ENCODE measurements at regions of chr9 and their contacts with region 1.

Region 1: GRCh38 chr9:112012026-112012902 is 115.7 kb downstream of the UGCG start:
- DNase-seq: peak; percentile 96
- ATAC-seq: peak; percentile 92
- H3K4me3 ChIP-seq: no peak overlapping the region
- H3K27ac ChIP-seq: peak overlapping the region; percentile 92
- H3K4me1 ChIP-seq: peaks cover 52% of the 10 kb centered on the region
- H3K27me3 ChIP-seq: no peaks in the 10 kb centered on the region
- CTCF ChIP-seq: no peak
- EP300 ChIP-seq: peak; percentile 96 to 97
- POLR2A ChIP-seq: peak; percentile 43; the same call in 1 of the 2 replicates
- RAD21 ChIP-seq: peak; percentile 35

Region 2: DNA sequence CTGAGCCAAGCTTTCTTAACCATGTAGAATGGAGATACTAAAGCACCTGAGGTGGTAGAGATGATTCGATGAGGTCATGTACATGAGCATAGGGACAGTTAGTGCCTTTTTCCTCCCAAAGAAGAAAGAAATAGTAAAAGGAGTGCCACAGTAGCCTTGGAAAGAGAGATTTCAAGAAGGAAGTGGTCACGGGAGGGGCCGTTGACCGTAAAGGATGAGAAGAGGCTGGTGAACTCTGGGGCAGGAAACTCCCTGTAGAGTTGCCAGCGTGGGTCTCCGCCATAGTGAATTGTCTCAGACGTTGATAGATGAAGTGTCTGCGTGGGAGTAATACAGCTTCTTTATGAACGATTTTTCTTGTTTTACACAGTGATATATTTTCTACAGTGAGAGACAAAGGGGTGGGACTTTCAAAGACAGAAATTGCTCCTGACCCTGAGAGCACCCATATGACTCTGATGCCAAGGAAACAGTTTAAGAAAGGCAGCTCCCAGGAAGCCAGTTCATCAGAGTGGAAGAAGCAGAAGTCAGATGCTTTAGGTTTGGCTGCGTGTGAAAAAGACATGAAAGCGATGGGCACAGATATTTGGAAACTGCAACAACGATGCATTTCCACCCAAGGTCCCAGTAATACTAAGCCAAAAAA is 74.4 kb before region 1 on chr9:
- CTCF ChIA-PET with region 1: interaction called, 8 read pairs
- POLR2A ChIA-PET with region 1: interaction called, 5 read pairs
- RAD21 ChIA-PET with region 1: interaction called, 12 read pairs
- SMC1A ChIA-PET with region 1: interaction called, 9 read pairs
- in situ Hi-C with region 1: no loop called
- intact Hi-C with region 1: no loop called
- DNase-seq: peak; percentile 74
- ATAC-seq: peak; percentile 90
- H3K4me3 ChIP-seq: no peak overlapping the region
- H3K27ac ChIP-seq: peak overlapping the region; percentile 80
- H3K4me1 ChIP-seq: peaks cover 21% of the 10 kb centered on the region
- H3K27me3 ChIP-seq: no peaks in the 10 kb centered on the region
- CTCF ChIP-seq: no peak
- EP300 ChIP-seq: peak; percentile 68 to 77; a peak in 2 of 4 replicates
- POLR2A ChIP-seq: no peak; the same call in none of the 2 replicates
- RAD21 ChIP-seq: no peak